ENCODE measurements at regions of chr1 and their contacts with region 1.

Region 1: GRCh38 chr1:74689621-74690363 is 16.2 kb upstream of the ERICH3 start:
- DNase-seq: peak; percentile 46
- ATAC-seq: peak; percentile 78; the same call in 1 of the 2 replicates
- H3K4me3 ChIP-seq: no peak overlapping the region
- H3K27ac ChIP-seq: 0 out of 2 replicates have a peak overlapping the region, but pooled peaks have one; percentile 23
- H3K4me1 ChIP-seq: no peaks in the 10 kb centered on the region; the same call in 1 of the 2 replicates
- H3K27me3 ChIP-seq: no peaks in the 10 kb centered on the region
- CTCF ChIP-seq: peak; percentile 76

Region 2: GRCh38 chr1:74205266-74205665 is 484.5 kb before region 1 on chr1:
- CTCF ChIA-PET with region 1: no interaction called
- POLR2A ChIA-PET with region 1: no interaction called
- in situ Hi-C with region 1: no loop called
- intact Hi-C with region 1: loop called (anchors 10 kb)
- DNase-seq: no peak
- ATAC-seq: no peak
- H3K4me3 ChIP-seq: no peak overlapping the region
- H3K27ac ChIP-seq: no peak overlapping the region
- H3K4me1 ChIP-seq: no peaks in the 10 kb centered on the region
- H3K27me3 ChIP-seq: no peaks in the 10 kb centered on the region
- CTCF ChIP-seq: no peak

Region 3: GRCh38 chr1:74504125-74504932 is 185.5 kb before region 1 on chr1:
- CTCF ChIA-PET with region 1: interaction called, 6 read pairs
- POLR2A ChIA-PET with region 1: no interaction called
- in situ Hi-C with region 1: no loop called
- intact Hi-C with region 1: loop called (anchors 10 kb)
- DNase-seq: peak; percentile 65
- ATAC-seq: peak; percentile 95
- H3K4me3 ChIP-seq: no peak overlapping the region
- H3K27ac ChIP-seq: no peak overlapping the region
- H3K4me1 ChIP-seq: no peaks in the 10 kb centered on the region
- H3K27me3 ChIP-seq: no peaks in the 10 kb centered on the region
- CTCF ChIP-seq: peak; percentile 92